Endothelial cell of umbilical vein (primary cell): ENCODE measurements at regions of chr13 and their contacts with region 1.

Region 1: DNA sequence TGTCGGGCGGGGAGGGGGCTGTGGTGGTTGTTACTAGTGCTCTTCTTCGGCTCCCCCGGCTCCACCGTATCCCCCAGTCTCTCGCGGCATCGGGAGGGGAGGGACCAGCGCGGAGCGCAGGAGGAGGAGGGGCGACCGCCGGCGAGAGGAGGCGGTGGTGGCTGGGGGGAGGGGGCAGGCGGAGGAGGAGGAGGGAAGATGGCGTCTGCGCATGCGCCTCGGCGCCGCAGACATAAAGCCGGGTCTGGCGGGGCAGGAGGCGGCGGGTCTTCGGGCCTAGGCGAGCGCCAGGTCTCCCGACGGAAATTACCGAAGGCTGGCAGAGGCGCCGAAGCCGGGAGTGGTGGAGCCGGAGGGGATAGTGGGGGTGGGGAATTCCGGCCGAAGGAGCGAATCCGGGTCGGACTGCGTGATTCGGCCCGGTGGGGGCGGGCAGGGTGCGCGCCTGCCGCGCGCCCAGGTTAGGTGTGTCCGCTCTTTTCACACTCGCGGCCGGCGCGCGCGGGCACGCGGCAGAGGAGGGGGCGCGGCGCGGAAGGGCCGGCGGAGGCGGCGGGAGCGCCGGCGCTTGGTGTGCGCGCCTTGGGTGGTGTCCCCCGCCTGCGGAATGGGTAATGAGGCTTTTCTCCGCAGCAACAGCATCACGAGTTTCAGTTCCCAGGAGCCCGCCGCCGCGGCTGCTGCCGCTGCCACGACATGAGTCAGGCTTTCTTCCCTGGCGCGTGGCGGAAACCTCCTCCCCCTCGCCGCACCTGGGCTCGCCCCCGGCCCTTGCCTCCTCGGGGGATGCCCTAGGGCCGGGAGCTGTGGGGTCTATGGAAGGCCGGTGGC is 1.3 kb upstream of the TSC22D1 start:
- DNase-seq: peak; percentile 96
- H3K4me3 ChIP-seq: peak overlapping the region; percentile 64 to 80 (median 72)
- H3K27ac ChIP-seq: peak overlapping the region; percentile 91
- H3K4me1 ChIP-seq: peaks cover 37% of the 10 kb centered on the region
- H3K27me3 ChIP-seq: no peaks in the 10 kb centered on the region
- CTCF ChIP-seq: no peak
- POLR2A ChIP-seq: peak; percentile 88

Region 2: DNA sequence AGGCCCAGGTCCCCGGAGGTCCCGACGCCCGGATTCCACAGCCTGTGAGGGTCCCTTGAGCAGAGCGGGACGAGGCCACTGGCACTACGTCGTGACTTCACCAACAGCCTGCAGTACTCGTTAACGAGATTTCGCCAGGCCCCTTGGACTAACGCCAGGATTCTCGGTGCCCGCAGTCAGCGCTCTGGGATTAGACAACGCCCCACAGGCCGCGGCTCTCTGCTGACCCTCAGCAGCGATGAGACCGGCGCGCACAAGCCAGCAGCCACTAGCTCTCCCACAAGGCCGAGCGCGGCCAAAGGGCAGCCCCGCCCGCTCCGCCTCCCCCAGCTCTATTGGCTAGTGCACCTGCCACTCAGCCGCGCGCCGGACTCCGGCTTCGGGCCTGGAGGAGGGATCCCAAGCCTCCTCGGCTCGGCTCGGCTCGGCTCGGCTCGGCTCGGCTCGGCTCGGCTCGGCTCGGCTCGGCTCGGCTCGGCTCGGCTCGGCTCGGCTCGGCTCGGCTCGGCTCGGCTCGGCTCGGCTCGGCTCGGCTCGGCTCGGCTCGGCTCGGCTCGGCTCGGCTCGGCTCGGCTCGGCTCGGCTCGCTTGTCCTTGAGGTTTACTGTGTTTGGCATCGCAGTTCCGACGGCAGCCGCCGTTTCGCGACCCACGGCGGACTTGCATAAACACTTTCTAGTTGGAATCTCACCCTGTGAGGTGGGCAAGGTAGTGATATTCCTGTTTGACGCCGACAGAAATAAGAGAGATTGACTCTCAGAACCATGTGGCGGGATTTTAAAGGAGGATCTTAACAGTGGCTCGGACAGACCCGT is 435.5 kb before region 1 on chr13:
- CTCF ChIA-PET with region 1: no interaction called
- POLR2A ChIA-PET with region 1: no interaction called
- dilution Hi-C with region 1: no loop called
- intact Hi-C with region 1: loop called (anchors 5 kb)
- DNase-seq: peak; percentile 96
- H3K4me3 ChIP-seq: peak overlapping the region; percentile 43 to 68 (median 50)
- H3K27ac ChIP-seq: peak overlapping the region; percentile 71
- H3K4me1 ChIP-seq: peaks cover 18% of the 10 kb centered on the region
- H3K27me3 ChIP-seq: no peaks in the 10 kb centered on the region
- CTCF ChIP-seq: no peak
- POLR2A ChIP-seq: peak; percentile 79

Region 3: DNA sequence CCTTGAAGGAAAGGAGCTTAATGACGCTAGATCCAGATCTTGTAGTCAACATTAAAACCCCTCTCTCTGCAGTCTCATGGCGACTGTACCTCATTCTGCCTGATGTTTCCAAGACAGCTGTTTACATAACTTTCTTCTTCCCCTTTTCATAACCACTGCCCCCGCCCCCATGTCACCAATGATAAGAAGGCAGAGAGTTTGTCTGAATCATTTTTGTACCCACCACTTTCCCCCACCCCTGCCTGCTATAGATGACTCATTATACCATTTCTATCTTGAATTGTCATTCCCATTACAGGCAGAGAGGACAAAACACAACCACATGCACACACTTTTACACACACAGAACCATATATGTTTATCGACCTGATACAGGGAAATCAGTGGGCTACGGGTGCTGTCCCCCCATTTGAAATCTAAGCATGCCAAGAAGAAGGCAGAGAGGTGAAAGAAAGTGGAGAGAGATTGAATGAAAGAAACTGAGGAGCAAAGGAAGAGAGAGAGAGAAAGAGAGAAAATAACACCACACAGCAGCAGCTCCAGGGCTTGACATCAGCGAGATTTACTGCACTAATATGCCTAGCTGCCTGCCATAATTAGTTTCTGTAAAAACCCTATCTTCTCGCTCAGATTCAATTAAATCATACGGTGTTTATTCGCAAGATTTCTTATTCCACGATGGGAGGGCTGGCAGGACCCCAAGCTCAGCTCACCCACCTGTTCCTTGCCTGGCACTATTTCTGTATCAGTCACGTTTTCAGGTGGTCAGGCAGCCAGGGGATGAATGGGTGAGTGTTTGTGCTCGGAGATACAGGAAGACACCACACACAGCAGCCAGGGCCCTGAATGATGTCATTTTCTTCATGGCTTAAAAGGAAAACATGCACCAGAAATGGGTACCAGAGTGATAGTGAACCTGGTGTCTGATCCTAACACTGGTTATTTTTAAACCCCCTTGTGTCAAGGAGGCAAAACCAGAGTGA is 318.1 kb before region 1 on chr13:
- CTCF ChIA-PET with region 1: no interaction called
- POLR2A ChIA-PET with region 1: no interaction called
- dilution Hi-C with region 1: no loop called
- intact Hi-C with region 1: no loop called
- DNase-seq: peak; percentile 67
- H3K4me3 ChIP-seq: no peak overlapping the region
- H3K27ac ChIP-seq: peak overlapping the region; percentile 55
- H3K4me1 ChIP-seq: peaks cover 24% of the 10 kb centered on the region
- H3K27me3 ChIP-seq: no peaks in the 10 kb centered on the region
- CTCF ChIP-seq: no peak
- POLR2A ChIP-seq: no peak

Region 4: GRCh38 chr13:44306401-44307192 is 270.9 kb before region 1 on chr13:
- CTCF ChIA-PET with region 1: no interaction called
- POLR2A ChIA-PET with region 1: no interaction called
- dilution Hi-C with region 1: no loop called
- intact Hi-C with region 1: loop called (anchors 5 kb)
- DNase-seq: peak; percentile 99
- H3K4me3 ChIP-seq: peak overlapping the region in 1 of 3 experiments; percentile 50
- H3K27ac ChIP-seq: peak overlapping the region; percentile 100
- H3K4me1 ChIP-seq: peaks cover 23% of the 10 kb centered on the region
- H3K27me3 ChIP-seq: no peaks in the 10 kb centered on the region
- CTCF ChIP-seq: no peak
- POLR2A ChIP-seq: no peak

Region 5: DNA sequence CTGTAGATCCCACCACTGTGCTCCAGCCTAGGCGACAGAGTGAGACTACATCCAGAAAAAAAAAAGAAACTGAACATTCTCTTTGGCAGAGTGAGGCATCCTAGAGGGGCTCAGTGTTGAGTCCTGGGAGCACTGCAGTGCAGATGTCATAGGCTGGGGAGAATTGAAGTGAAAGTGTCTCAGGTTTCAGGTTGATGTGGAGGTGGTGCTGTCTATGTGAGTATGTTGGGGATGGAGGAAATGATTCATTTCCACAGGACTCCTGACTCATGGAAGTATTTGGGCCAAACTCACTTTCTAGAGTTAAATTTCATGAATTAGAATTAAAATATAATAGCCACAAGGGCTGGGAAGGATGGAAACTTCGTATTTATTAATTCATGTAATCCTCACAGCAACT is 133.1 kb after region 1 on chr13:
- CTCF ChIA-PET with region 1: no interaction called
- POLR2A ChIA-PET with region 1: interaction called, 3 read pairs
- dilution Hi-C with region 1: no loop called
- intact Hi-C with region 1: loop called (anchors 2 kb)
- DNase-seq: peak; percentile 92
- H3K4me3 ChIP-seq: peak overlapping the region in 1 of 3 experiments; percentile 29
- H3K27ac ChIP-seq: peak overlapping the region; percentile 91
- H3K4me1 ChIP-seq: peaks cover 38% of the 10 kb centered on the region
- H3K27me3 ChIP-seq: no peaks in the 10 kb centered on the region
- CTCF ChIP-seq: no peak
- POLR2A ChIP-seq: no peak

Region 6: DNA sequence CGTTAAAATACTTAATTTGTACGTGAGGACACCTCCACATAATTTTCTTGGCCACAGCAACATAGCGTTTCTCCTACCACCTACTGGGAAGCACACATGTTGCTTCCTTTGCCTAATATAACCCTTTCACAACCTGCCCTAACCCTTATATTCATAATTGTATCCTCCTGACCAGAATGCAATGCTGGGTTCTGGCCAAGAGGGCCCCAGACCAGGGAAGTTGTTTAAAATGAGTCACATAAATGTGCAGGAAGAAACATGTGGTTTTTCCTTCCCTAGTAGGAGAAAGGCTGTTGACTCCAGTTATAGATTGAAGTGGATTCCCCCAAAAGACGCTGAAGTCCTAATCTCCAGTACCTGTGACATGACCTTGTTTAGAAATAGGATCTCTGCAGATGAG is 224.5 kb after region 1 on chr13:
- CTCF ChIA-PET with region 1: interaction called, 3 read pairs
- POLR2A ChIA-PET with region 1: no interaction called
- dilution Hi-C with region 1: no loop called
- intact Hi-C with region 1: loop called (anchors 5 kb)
- DNase-seq: peak; percentile 92
- H3K4me3 ChIP-seq: no peak overlapping the region
- H3K27ac ChIP-seq: no peak overlapping the region
- H3K4me1 ChIP-seq: peaks cover 20% of the 10 kb centered on the region
- H3K27me3 ChIP-seq: no peaks in the 10 kb centered on the region
- CTCF ChIP-seq: no peak
- POLR2A ChIP-seq: no peak

Region 7: DNA sequence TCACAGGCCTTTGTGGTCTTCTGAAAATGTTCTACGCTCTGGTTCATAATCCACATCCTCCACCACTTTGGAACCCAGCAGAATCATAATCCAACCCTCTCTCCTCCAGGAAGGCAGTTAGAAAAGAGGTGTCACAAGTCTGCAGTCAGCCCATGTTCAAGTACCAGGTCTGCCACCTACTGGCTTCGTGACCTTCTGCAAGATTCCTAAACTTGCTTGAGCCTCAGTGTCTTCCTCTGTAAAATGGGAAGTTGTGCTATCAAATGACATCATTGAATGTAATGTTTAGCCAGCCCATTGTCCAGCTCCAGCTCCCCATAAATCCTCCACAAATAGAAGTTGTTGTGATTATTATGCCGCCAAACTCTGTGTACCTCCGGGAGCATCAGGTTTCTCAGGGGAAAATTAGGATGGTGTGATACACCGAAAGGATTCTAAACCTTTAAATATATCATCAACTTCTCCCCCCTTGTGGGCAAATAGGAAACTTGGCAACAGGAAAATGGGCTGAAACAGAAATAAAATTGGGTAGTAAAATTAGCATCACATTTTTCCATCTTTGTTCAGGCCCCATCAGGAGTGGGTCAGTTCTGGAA is 302.1 kb after region 1 on chr13:
- CTCF ChIA-PET with region 1: no interaction called
- POLR2A ChIA-PET with region 1: no interaction called
- dilution Hi-C with region 1: no loop called
- intact Hi-C with region 1: loop called (anchors 1 kb)
- DNase-seq: peak; percentile 48
- H3K4me3 ChIP-seq: no peak overlapping the region
- H3K27ac ChIP-seq: no peak overlapping the region
- H3K4me1 ChIP-seq: peaks cover 12% of the 10 kb centered on the region
- H3K27me3 ChIP-seq: no peaks in the 10 kb centered on the region
- CTCF ChIP-seq: peak; percentile 47 to 52
- POLR2A ChIP-seq: no peak

Region 8: GRCh38 chr13:44930963-44931623 is 353.6 kb after region 1 on chr13:
- CTCF ChIA-PET with region 1: interaction called, 3 read pairs
- POLR2A ChIA-PET with region 1: no interaction called
- dilution Hi-C with region 1: no loop called
- intact Hi-C with region 1: loop called (anchors 1 kb)
- DNase-seq: no peak
- H3K4me3 ChIP-seq: no peak overlapping the region
- H3K27ac ChIP-seq: peak overlapping the region; percentile 94
- H3K4me1 ChIP-seq: peaks cover 63% of the 10 kb centered on the region
- H3K27me3 ChIP-seq: no peaks in the 10 kb centered on the region
- CTCF ChIP-seq: no peak
- POLR2A ChIP-seq: no peak